ENCODE measurements at regions of chrX and their contacts with region 1.

Region 1: DNA sequence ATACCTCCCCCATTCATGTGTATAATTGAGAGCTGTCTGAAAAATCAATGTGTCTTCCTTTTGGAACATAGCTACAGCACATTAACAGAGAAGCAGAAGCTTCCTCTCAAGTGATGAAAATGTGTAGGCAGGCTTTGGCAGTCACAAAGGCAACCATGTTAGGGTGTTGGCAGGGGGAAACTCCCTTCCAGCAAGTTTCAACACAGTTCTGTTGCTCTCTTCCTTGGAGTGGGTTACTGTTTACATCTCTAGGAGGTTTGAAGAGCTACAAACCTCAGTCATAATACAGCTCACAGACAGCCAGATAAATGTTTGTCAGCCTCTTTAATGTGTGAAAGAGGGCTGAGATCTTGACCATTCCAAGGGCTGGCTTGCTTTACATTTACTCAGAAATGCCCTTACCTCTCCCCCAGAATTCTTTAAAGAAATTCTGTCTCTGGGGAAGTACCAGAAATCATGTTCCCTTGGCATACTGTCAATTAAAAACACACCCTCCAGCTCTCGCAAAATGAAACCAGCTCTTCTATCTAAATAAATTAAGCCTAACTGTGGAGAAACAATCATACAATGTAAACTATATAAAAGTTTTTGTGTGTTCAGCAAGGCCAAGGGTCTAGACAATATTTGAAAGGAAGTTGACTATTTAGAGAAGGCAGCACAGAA is 18.9 kb downstream of the ZBTB33 start:
- DNase-seq: no peak
- ATAC-seq: peak; percentile 29
- H3K4me3 ChIP-seq: no peak overlapping the region
- H3K27ac ChIP-seq: no peak overlapping the region
- H3K4me1 ChIP-seq: no peaks in the 10 kb centered on the region
- H3K27me3 ChIP-seq: no peaks in the 10 kb centered on the region
- CTCF ChIP-seq: no peak
- POLR2A ChIP-seq: no peak
- RAD21 ChIP-seq: no peak

Region 2: GRCh38 chrX:120321520-120322281 is 52.2 kb after region 1 on chrX:
- CTCF ChIA-PET with region 1: interaction called, 10 read pairs
- POLR2A ChIA-PET with region 1: no interaction called
- dilution Hi-C with region 1: no loop called
- in situ Hi-C with region 1: no loop called
- intact Hi-C with region 1: no loop called
- DNase-seq: no peak
- ATAC-seq: no peak
- H3K4me3 ChIP-seq: no peak overlapping the region
- H3K27ac ChIP-seq: no peak overlapping the region
- H3K4me1 ChIP-seq: no peaks in the 10 kb centered on the region
- H3K27me3 ChIP-seq: peaks cover 4% of the 10 kb centered on the region; the same call in 1 of the 2 replicates
- CTCF ChIP-seq: no peak
- POLR2A ChIP-seq: no peak
- RAD21 ChIP-seq: no peak

Measured in IMR-90 (cell line).